ENCODE measurements at regions of chr5 and their contacts with region 1.

Region 1: DNA sequence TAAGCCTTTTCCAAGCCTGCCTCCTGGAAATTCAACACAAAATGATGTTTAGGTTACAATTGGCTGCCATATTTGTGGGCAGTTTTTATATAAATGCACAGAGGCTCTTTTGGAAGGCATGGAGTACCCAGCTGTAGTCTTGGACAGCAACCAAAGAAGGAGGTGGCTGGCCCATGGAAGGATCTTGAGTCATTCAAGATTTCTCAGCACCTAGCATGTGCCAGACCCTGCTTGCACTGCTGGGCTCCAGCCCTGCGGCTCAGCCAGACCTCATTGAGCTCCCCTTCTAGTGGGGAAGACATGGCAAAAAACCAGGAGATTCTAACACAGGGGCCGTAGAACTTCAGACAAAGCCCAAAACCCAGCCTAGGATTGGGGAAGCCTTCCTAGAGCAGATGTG is 22.1 kb downstream of the JADE2 start:
- DNase-seq: no peak
- ATAC-seq: peak in 1 of 2 experiments; percentile 27; a peak in 1 of 6 replicates
- H3K4me3 ChIP-seq: no peak overlapping the region
- H3K27ac ChIP-seq: no peak overlapping the region
- H3K4me1 ChIP-seq: peaks cover 50% of the 10 kb centered on the region
- CTCF ChIP-seq: no peak
- EP300 ChIP-seq: no peak
- POLR2A ChIP-seq: no peak
- RAD21 ChIP-seq: no peak

Region 2: GRCh38 chr5:134561871-134562296 is 14.3 kb after region 1 on chr5:
- CTCF ChIA-PET with region 1: interaction called, 10 read pairs
- POLR2A ChIA-PET with region 1: no interaction called
- DNase-seq: peak; percentile 48 to 53
- ATAC-seq: peak; percentile 62 to 81; a peak in 5 of 6 replicates
- H3K4me3 ChIP-seq: no peak overlapping the region
- H3K27ac ChIP-seq: peak overlapping the region; percentile 29 to 75; a peak in 3 of 6 replicates
- H3K4me1 ChIP-seq: peaks cover 14% of the 10 kb centered on the region
- CTCF ChIP-seq: peak; percentile 37; the same call in 2 of the 3 replicates
- EP300 ChIP-seq: no peak
- POLR2A ChIP-seq: no peak
- RAD21 ChIP-seq: peak; percentile 20 to 41; a peak in 3 of 5 replicates

Measured in A549 (cell line).